CD8-positive, alpha-beta T cell (primary cell): ENCODE measurements at regions of chr7 and their contacts with region 1.

Region 1: GRCh38 chr7:134646425-134647305 is at the start of gene BPGM:
- DNase-seq: peak; percentile 93 to 100 (median 96)
- ATAC-seq: peak; percentile 92
- H3K4me3 ChIP-seq: peak within 1 kb of the TSS; percentile 69 to 81
- H3K4me3 Mint-ChIP-seq: no peak within 1 kb of the TSS
- H3K27ac ChIP-seq: peak within 1 kb of the TSS; percentile 84 to 89
- H3K27ac Mint-ChIP-seq: no peak within 1 kb of the TSS
- H3K4me1 ChIP-seq: peaks cover 22% of the 10 kb centered on the region
- H3K4me1 Mint-ChIP-seq: peaks cover 28% of the 10 kb centered on the region
- H3K27me3 ChIP-seq: no peaks in the 10 kb centered on the region
- H3K27me3 Mint-ChIP-seq: no peaks in the 10 kb centered on the region
- CTCF ChIP-seq: peak; percentile 26
- total RNA-seq, gene BPGM: 30.3 to 31.4 TPM

Region 2: GRCh38 chr7:134101716-134102115 is 544.9 kb before region 1 on chr7:
- CTCF ChIA-PET with region 1: no interaction called
- POLR2A ChIA-PET with region 1: no interaction called
- intact Hi-C with region 1: no loop called
- DNase-seq: no peak
- ATAC-seq: no peak
- H3K4me3 ChIP-seq: no peak overlapping the region
- H3K4me3 Mint-ChIP-seq: no peak overlapping the region
- H3K27ac ChIP-seq: no peak overlapping the region
- H3K27ac Mint-ChIP-seq: no peak overlapping the region
- H3K4me1 ChIP-seq: no peaks in the 10 kb centered on the region
- H3K4me1 Mint-ChIP-seq: no peaks in the 10 kb centered on the region
- H3K27me3 ChIP-seq: no peaks in the 10 kb centered on the region
- H3K27me3 Mint-ChIP-seq: no peaks in the 10 kb centered on the region
- CTCF ChIP-seq: no peak

Region 3: DNA sequence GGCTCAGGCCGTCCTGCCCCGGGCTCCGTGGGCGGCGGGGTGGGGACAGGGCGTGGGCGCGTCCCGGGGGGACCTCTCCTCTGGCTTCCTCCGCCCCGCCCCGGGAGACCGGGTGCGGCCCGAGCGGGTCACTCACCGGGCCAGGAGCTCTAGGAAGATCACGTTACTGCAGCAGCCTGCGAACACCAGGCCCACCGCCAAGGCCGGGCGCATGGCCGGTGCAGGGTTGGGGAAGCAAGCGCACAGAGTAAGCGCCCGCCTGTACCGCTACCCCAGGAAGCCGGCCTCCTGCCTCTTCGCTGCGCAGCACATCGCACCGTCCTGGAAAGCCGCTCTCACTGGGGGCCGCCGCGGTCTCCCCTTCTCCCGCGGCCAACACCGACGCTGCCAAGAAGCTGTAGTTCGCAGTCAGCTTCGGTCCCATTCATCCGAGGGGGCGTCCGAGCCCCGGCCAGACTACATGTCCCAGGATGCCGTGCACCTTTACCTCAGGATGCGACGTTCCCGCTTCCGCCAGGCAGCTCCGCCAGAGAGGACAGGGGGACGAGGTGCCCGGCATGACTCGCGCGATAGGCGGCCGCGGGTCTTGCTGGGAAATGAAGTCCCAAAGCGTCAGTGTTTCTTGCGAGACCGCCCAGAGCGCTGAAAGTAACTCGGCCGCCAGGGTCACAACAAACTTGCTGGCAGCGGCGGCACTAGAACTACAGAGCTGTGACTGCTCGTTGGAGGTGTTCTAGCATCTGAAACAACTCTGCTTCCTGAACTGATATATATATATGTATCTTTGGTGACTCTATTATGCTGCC is 329.9 kb before region 1 on chr7 and contains the start of gene SLC35B4:
- CTCF ChIA-PET with region 1: no interaction called
- POLR2A ChIA-PET with region 1: no interaction called
- intact Hi-C with region 1: loop called (anchors 1 to 2 kb)
- DNase-seq: peak; percentile 88 to 97 (median 94)
- ATAC-seq: peak; percentile 97
- H3K4me3 ChIP-seq: peak within 1 kb of the TSS; percentile 88 to 98
- H3K4me3 Mint-ChIP-seq: peak within 1 kb of the TSS; percentile 97
- H3K27ac ChIP-seq: peak within 1 kb of the TSS; percentile 58 to 72
- H3K27ac Mint-ChIP-seq: peak within 1 kb of the TSS; percentile 92
- H3K4me1 ChIP-seq: peaks cover 14% of the 10 kb centered on the region
- H3K4me1 Mint-ChIP-seq: peaks cover 25% of the 10 kb centered on the region
- H3K27me3 ChIP-seq: no peaks in the 10 kb centered on the region
- H3K27me3 Mint-ChIP-seq: peaks cover 3% of the 10 kb centered on the region
- CTCF ChIP-seq: peak; percentile 29
- total RNA-seq, gene SLC35B4: 5.1 to 7.0 TPM

Region 4: DNA sequence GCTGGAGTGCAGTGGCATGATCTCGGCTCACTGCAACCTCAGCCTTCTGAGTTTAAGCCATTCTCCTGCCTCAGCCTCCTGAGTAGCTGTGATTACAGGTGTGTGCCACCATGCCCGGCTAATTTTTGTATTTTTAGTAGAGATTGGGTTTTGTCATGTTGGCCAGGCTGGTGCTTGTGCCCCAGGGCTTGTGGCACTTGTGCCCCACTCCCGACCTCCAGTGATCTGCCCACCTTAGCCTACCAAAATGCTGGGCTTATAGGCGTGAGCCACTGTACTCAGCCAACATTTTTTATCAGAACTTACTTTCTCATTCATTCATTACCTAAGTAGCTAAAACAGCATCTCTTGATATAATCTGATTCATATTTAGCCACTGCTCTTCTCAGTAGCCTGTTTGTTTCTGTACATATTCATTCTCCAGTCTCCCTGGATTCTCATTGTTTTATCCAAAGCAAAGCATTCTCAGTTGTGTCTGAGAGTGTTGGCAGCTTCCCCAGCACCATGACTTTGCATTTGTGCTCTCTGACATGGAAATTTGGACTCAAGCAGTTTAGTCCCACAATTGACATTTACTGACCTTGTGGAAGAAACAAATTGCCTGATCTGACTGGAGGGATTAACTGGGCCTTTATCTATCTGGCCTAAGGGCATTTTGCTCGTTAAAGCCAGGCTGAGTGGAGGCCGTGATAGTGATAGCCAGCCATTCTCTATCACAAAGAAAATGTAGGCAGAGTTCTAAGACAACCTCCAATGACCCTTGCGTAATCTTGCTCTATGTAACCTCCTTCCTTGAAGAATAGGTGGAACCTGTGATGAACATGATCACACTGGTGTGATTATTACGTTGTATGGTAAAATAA is 52.9 kb before region 1 on chr7:
- CTCF ChIA-PET with region 1: no interaction called
- POLR2A ChIA-PET with region 1: no interaction called
- intact Hi-C with region 1: no loop called
- DNase-seq: no peak
- ATAC-seq: no peak
- H3K4me3 ChIP-seq: no peak overlapping the region
- H3K4me3 Mint-ChIP-seq: no peak overlapping the region
- H3K27ac ChIP-seq: no peak overlapping the region
- H3K27ac Mint-ChIP-seq: no peak overlapping the region
- H3K4me1 ChIP-seq: no peaks in the 10 kb centered on the region
- H3K4me1 Mint-ChIP-seq: no peaks in the 10 kb centered on the region
- H3K27me3 ChIP-seq: no peaks in the 10 kb centered on the region
- H3K27me3 Mint-ChIP-seq: peaks cover 4% of the 10 kb centered on the region
- CTCF ChIP-seq: no peak

Region 5: DNA sequence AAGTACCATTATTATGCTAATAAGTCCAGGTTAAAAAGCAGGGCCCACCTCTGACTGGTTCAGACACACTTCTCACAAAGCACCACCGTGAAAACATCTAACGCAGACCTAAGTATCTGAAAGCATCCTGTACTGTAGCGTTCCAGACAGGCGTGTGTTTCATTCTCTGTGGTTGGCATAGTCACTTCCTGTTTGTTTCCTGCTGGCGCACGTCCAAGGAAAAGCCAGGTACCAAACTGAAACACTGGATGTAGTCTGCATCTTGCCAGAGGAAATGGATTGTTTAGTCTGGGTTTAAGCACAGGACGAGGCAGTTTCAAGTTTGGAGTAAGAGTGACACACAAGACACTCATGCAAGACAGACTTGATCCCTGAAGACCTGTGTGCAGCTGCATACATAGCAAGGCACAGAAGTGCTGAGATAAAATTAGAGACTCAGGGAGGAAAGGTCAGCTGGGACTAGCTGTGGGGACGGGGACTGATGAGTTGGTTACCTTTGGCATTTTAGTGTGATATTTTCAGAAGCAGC is 23.2 kb after region 1 on chr7:
- CTCF ChIA-PET with region 1: interaction called, 17 read pairs
- POLR2A ChIA-PET with region 1: interaction called, 63 read pairs
- intact Hi-C with region 1: loop called (anchors 1 kb)
- DNase-seq: peak; percentile 63 to 94 (median 89)
- ATAC-seq: peak; percentile 94
- H3K4me3 ChIP-seq: peak overlapping the region in 1 of 2 experiments; percentile 4
- H3K4me3 Mint-ChIP-seq: peak overlapping the region; percentile 68
- H3K27ac ChIP-seq: peak overlapping the region; percentile 65 to 82
- H3K27ac Mint-ChIP-seq: peak overlapping the region; percentile 95
- H3K4me1 ChIP-seq: peaks cover 34% of the 10 kb centered on the region
- H3K4me1 Mint-ChIP-seq: peaks cover 46% of the 10 kb centered on the region
- H3K27me3 ChIP-seq: no peaks in the 10 kb centered on the region
- H3K27me3 Mint-ChIP-seq: no peaks in the 10 kb centered on the region
- CTCF ChIP-seq: no peak

Region 6: DNA sequence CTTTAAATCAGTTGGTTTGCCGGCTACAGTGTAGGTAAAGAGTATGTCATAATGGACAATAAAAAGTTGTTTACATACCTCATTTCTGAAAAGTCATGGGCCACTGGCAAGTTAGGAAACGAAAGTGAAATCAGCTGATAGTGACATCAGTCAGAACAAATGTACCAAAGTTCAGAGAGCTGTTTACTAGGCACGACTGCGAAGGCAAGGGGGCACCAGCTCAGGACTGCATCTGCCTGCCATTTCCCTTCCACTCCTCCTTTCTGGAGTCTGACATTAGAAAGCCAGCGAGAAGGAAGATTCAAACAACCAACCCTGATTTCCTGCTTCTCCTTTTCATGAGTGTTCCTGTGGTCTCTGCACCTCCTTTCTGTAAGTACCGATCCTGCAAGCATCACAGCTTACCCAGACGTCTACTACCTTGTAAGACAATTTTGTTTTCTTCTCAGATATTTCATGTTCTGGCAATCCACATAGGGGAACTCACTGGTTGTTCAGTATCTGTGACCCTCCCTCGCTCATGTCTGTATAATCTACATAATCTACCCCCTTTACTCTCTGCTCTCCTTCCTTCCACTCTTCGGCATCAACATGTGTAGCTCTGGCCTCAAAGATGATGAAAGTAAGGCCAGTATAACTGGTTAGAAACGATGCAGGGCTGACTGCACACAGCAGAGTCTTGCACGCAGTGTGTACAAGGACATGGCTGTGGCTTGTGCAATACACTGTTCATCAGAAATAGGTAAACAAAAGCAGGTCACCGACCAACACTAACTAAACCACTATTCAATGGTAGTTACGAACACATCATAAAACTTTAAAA is 501.4 kb after region 1 on chr7 and contains the start of gene TMEM140:
- CTCF ChIA-PET with region 1: no interaction called
- POLR2A ChIA-PET with region 1: interaction called, 14 read pairs
- intact Hi-C with region 1: loop called (anchors 5 kb)
- DNase-seq: peak; percentile 36 to 91 (median 63)
- ATAC-seq: peak; percentile 78
- H3K4me3 ChIP-seq: peak within 1 kb of the TSS; percentile 60 to 70
- H3K4me3 Mint-ChIP-seq: peak within 1 kb of the TSS; percentile 87
- H3K27ac ChIP-seq: peak within 1 kb of the TSS; percentile 92 to 97
- H3K27ac Mint-ChIP-seq: peak within 1 kb of the TSS; percentile 97
- H3K4me1 ChIP-seq: peaks cover 47% of the 10 kb centered on the region
- H3K4me1 Mint-ChIP-seq: peaks cover 80% of the 10 kb centered on the region
- H3K27me3 ChIP-seq: no peaks in the 10 kb centered on the region
- H3K27me3 Mint-ChIP-seq: no peaks in the 10 kb centered on the region
- CTCF ChIP-seq: no peak
- total RNA-seq, gene TMEM140: 18.8 to 21.8 TPM

Region 7: GRCh38 chr7:135509903-135510602 is 863.4 kb after region 1 on chr7 and contains the start of gene CNOT4:
- CTCF ChIA-PET with region 1: no interaction called
- POLR2A ChIA-PET with region 1: interaction called, 3 read pairs
- intact Hi-C with region 1: loop called (anchors 5 kb)
- DNase-seq: peak; percentile 94 to 98 (median 97)
- ATAC-seq: peak; percentile 94
- H3K4me3 ChIP-seq: peak within 1 kb of the TSS; percentile 80 to 84
- H3K4me3 Mint-ChIP-seq: no peak within 1 kb of the TSS
- H3K27ac ChIP-seq: peak within 1 kb of the TSS; percentile 78 to 95
- H3K27ac Mint-ChIP-seq: no peak within 1 kb of the TSS
- H3K4me1 ChIP-seq: peaks cover 26% of the 10 kb centered on the region
- H3K4me1 Mint-ChIP-seq: peaks cover 14% of the 10 kb centered on the region
- H3K27me3 ChIP-seq: no peaks in the 10 kb centered on the region
- H3K27me3 Mint-ChIP-seq: no peaks in the 10 kb centered on the region
- CTCF ChIP-seq: no peak
- total RNA-seq, gene CNOT4: 24.8 to 25.9 TPM

Region 8: GRCh38 chr7:135977007-135977741 is 1330.5 kb after region 1 on chr7 and contains the start of gene MTPN:
- CTCF ChIA-PET with region 1: no interaction called
- POLR2A ChIA-PET with region 1: no interaction called
- intact Hi-C with region 1: loop called (anchors 1 to 5 kb)
- DNase-seq: peak; percentile 94 to 98 (median 98)
- ATAC-seq: peak; percentile 81
- H3K4me3 ChIP-seq: peak within 1 kb of the TSS; percentile 89 to 93
- H3K4me3 Mint-ChIP-seq: peak within 1 kb of the TSS; percentile 92
- H3K27ac ChIP-seq: peak within 1 kb of the TSS; percentile 82 to 88
- H3K27ac Mint-ChIP-seq: peak within 1 kb of the TSS; percentile 93
- H3K4me1 ChIP-seq: peaks cover 71% of the 10 kb centered on the region
- H3K4me1 Mint-ChIP-seq: peaks cover 79% of the 10 kb centered on the region
- H3K27me3 ChIP-seq: no peaks in the 10 kb centered on the region
- H3K27me3 Mint-ChIP-seq: no peaks in the 10 kb centered on the region
- CTCF ChIP-seq: no peak
- total RNA-seq, gene MTPN: 91.9 to 101 TPM